Cardiac septum (tissue), 1 donor: ENCODE measurements at regions of chr2 and their contacts with region 1.

Region 1: DNA sequence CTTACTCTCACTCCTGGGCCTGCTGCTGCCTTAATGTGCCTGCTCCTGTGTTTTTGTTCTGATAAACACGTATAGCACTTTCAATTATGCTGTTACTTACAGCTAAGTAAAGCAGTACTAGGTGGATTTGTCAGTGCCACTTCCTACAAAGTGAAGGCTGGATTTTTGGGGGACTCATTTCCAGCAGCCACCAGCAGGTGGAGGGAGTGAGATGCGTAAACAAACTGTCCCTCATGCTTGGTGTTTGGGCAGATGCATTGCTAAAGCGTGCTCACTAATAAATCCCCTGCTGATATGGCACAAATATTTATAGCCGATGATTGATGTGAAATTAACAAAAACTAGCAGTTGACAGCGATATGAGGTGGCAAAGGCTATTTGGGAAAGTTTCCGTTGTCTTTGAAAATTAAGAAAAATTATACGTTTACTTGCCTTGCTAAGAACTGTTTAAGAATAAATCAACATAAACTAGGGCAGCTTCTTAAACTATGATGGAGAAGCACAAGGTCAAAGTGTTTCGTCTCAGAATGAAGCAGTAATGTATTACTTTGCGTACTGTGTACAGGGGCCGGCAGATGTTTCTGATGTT is 101.7 kb downstream of the AGAP1 start:
- DNase-seq: no peak

Region 2: DNA sequence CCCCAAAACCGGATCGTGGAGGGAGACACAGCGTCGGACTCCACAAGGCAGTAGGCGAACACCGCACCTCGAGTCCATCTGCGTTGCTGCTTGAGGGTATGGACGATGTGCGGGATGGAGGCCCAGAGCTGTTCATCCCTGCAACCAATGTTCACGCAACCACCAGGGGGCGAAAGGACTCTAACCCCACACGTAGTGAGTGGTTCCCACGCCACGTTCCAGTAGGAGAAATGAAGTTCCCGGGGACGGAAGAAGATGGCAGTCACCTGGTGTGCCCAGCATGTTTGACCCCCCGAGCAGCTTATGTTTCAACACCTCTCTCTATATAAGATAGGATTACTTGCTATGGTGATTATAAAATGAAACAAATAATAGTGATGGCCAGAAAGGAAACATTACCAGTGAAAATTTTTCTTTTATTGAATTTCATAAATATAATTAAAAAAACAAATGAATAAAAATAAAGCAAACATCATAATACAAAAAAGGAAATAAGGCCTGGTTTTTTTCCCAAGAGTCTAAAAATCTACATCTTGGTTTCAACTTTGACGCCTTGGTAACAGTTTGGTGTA is 459.4 kb before region 1 on chr2:
- intact Hi-C with region 1: loop called (anchors 1 kb)
- DNase-seq: peak; percentile 87

Region 3: GRCh38 chr2:235390103-235390812 is 205.3 kb before region 1 on chr2:
- intact Hi-C with region 1: no loop called
- DNase-seq: no peak

Region 4: GRCh38 chr2:235642446-235643098 is 47.1 kb after region 1 on chr2:
- intact Hi-C with region 1: loop called (anchors 5 kb)
- DNase-seq: no peak

Region 5: DNA sequence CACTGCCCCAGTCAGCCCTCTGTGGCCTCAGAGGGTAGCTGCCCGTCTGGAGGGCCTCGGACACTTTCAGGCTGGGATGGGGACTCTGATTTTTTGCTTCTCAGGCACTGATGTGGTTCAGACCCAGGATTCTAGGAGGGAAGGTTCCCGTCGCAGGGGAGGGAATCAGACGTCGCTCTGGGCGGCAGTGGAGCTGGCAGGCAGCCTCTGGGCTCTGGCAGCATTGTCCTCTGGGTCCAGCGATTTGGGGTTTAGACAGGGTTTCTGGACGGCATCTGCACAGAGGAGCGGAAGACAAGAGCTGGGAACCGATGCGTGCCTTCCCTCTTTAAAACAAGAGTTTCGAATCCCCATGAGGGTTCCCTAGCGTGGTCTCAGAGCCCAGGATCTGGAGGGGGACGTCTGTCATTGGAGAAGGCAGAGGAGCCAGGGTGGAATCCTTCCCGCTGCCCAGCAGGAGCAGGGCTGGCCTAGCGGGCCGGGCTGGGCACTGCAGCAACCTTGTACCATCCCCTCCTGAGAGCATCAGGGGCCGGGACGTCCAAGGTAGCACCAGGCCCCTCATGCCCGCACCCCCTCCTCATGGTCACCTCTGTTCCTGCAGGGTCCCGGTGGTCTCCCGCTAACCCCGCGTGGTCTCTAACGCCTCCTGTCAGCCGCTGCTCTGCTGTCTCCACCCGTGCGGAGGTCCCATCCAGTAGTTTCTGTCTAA is 144.3 kb after region 1 on chr2:
- intact Hi-C with region 1: loop called (anchors 2 kb)
- DNase-seq: no peak